Activated B cell treated with CpG ODN at 0.5 μM for 24 hours (primary cell): ENCODE measurements at regions of chr2 and their contacts with region 1.

Region 1: DNA sequence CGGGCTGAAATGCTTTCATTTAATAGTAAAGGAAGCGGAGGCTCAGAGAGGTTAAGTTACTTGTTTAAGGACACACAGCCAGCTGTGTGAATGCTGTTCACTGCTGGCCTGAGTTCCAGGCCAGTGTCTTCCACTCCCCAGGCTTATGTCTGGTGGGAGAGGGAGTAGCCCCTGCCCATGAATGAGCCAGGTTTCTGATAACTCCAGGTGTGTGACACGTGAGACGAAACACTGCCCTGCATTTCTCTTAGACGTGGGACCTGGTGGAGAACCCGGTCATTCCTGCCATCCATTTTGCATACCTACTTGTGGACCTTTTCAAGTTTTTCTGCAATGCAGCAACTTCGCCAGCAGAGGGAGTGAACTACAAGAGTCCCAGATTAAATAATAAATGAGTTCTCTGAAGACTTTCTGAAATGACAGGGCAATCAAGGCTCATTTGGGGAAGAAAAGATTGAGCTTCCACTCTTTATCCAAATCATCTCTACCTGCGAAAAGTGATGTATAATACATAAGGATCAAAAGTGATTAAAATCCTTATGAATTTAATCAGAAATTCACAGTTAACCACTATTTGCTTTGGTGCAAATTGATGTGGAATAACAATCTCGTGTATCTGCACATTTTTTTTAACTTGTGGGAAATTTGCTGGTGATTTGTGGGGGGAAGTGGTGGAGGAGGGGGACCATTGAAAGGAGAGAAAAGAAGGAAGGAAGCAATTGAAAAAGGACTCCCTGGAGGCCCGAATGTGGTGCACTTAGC is 79.4 kb upstream of the ASB18 start:
- DNase-seq: no peak
- ATAC-seq: no peak
- H3K4me3 Mint-ChIP-seq: no peak overlapping the region
- H3K27ac Mint-ChIP-seq: no peak overlapping the region
- H3K4me1 Mint-ChIP-seq: no peaks in the 10 kb centered on the region
- H3K27me3 Mint-ChIP-seq: peaks cover 9% of the 10 kb centered on the region
- CTCF ChIP-seq: peak; percentile 14

Region 2: DNA sequence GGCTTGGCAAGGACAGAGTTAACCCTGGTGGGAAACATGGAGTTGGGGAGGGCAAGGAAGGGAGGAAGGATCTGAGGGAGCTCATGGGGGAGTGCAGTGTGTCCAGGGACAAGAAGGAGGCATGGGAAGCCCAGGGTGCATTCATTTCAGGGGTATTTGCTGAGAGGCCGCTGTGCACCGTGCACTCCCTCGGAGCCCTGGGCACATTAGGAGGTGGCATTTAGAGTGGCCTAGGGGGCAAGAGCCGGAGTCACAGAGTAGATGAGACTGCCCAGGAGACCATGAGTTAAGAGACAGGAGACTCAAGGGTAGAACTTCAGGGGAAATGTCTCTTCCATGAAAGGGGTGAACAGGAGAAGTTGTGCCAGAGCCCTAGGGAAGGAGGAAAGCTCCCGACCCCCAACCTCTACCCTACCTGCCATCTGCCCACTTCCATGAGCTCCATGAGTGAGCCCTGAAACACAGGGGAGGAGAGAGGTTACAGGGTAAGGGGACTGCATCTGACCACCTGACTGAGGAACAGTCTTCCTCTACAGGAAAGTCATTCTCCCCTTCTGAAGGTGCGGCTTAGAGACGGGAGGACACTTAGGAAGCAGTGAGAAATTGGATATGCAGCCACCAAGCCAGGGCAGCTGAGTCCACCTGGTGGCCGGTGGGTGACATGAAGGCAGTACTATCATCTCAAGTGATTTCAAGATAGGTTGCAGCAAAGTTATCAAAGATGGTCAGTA is 683.6 kb after region 1 on chr2:
- CTCF ChIA-PET with region 1: interaction called, 4 read pairs
- POLR2A ChIA-PET with region 1: no interaction called
- intact Hi-C with region 1: loop called (anchors 1 kb)
- DNase-seq: no peak
- ATAC-seq: no peak
- H3K4me3 Mint-ChIP-seq: no peak overlapping the region
- H3K27ac Mint-ChIP-seq: no peak overlapping the region
- H3K4me1 Mint-ChIP-seq: no peaks in the 10 kb centered on the region
- H3K27me3 Mint-ChIP-seq: peaks cover 6% of the 10 kb centered on the region
- CTCF ChIP-seq: no peak

Region 3: GRCh38 chr2:237060534-237061312 is 717.1 kb after region 1 on chr2:
- CTCF ChIA-PET with region 1: interaction called, 3 read pairs
- POLR2A ChIA-PET with region 1: interaction called, 11 read pairs
- intact Hi-C with region 1: loop called (anchors 1 kb)
- DNase-seq: no peak
- ATAC-seq: no peak
- H3K4me3 Mint-ChIP-seq: no peak overlapping the region
- H3K27ac Mint-ChIP-seq: no peak overlapping the region
- H3K4me1 Mint-ChIP-seq: peaks cover 37% of the 10 kb centered on the region
- H3K27me3 Mint-ChIP-seq: no peaks in the 10 kb centered on the region
- CTCF ChIP-seq: no peak

Region 4: GRCh38 chr2:237072067-237072931 is 728.7 kb after region 1 on chr2:
- CTCF ChIA-PET with region 1: interaction called, 3 read pairs
- POLR2A ChIA-PET with region 1: no interaction called
- intact Hi-C with region 1: loop called (anchors 1 kb)
- DNase-seq: peak; percentile 60
- ATAC-seq: peak; percentile 56
- H3K4me3 Mint-ChIP-seq: no peak overlapping the region
- H3K27ac Mint-ChIP-seq: no peak overlapping the region
- H3K4me1 Mint-ChIP-seq: no peaks in the 10 kb centered on the region
- H3K27me3 Mint-ChIP-seq: no peaks in the 10 kb centered on the region
- CTCF ChIP-seq: peak; percentile 87